Ovary (tissue), 10 donors: ENCODE measurements at regions of chr18 and their contacts with region 1.

Region 1: DNA sequence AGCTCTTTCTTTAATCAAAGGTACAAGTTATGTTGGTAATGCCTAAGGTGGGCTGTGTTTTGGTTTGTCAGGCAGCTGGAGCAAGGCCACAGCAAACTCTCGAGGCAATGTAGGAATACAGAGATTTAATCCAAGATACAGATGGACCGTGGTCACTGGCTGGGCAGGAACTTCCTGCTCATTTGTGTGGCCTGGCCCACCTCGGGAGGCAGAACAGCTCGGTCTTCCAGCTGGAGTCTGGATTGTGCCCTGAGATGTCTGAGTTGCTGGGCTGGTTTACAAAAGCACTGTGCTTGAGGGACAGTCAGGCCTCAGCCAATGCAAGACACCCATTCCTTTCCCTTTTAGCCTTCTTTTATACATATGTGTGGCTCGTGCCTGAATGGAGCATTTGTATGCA is 506.1 kb upstream of the SALL3 start:
- DNase-seq: no peak
- H3K4me3 ChIP-seq: no peak overlapping the region
- H3K27ac ChIP-seq: no peak overlapping the region
- H3K4me1 ChIP-seq: no peaks in the 10 kb centered on the region
- H3K27me3 ChIP-seq: no peaks in the 10 kb centered on the region
- CTCF ChIP-seq: no peak
- EP300 ChIP-seq: no peak
- POLR2A ChIP-seq: no peak

Region 2: DNA sequence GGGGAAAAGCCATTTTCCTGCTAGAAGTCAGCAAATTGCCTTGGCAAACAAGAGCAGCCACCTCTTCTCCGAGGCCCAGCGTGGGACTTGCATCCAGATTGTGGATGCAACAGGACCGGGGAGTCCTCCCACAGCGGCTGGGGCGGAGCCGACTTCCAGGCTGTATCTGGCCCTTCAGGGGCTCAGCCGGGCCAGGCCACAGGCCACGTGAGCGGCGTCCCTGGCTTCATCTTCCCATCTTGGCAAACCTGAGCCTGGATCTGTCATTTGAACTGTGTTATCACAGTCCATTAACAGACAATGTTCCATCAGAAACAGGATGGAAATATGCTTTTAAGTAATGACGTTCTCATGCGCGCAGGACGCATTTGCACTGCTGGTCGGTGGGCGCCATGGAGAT is 22.5 kb after region 1 on chr18:
- intact Hi-C with region 1: loop called in 1 of 4 experiments (anchors 1 kb)
- DNase-seq: no peak
- H3K4me3 ChIP-seq: no peak overlapping the region
- H3K27ac ChIP-seq: no peak overlapping the region
- H3K4me1 ChIP-seq: no peaks in the 10 kb centered on the region
- H3K27me3 ChIP-seq: no peaks in the 10 kb centered on the region
- CTCF ChIP-seq: no peak
- EP300 ChIP-seq: no peak
- POLR2A ChIP-seq: no peak